ENCODE measurements at regions of chr17 and their contacts with region 1.

Region 1: DNA sequence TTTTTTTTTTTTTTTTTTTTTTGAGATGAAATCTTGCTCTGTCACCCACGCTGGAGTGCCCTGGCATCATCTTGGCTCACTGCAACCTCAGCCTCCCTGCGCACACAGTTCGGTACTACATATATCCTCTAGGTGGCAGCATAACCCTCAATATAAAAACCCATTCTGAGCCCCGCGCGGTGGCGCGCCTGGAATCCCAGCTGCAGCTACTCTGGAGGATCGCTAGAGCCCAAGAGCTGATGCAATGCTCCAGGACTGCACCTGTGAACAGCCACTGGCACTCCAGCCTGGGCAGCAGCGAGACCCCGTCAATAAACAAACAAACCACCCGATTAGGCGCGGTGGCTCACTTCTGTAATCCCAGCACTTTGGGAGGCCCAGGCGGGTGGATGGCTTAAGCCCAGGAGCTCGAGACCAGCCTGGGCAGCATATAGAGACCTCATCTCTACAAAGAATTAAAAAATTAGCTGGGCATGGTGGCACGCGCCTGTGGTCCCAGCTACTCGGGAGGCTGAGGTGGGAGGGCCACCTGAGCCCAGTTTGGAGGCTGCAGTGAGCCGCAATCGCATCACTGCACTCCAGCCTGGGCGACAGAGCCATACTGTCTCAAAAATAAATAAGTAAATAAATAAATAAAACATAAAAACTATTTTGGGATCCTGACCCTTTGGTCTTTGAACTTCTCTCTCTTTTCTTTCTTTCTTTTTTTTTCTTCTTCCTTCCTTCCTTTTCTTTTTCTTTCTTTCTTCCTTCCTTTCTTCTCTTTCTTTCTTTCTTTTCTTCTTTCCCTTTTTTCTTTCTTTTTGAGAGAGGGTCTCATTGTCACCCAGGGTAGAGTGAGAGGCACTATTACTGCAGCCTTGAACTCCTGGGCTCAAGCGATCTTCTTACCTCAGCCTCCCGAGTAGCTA is 15.4 kb upstream of the AKAP10 start:
- DNase-seq: peak; percentile 52 to 79 (median 74)
- ATAC-seq: peak; percentile 100
- H3K4me3 ChIP-seq: no peak overlapping the region
- H3K4me3 Mint-ChIP-seq: peak overlapping the region in 7 of 10 donors; percentile 23 to 62 (median 56)
- H3K27ac ChIP-seq: no peak overlapping the region
- H3K27ac Mint-ChIP-seq: peak overlapping the region in 2 of 9 donors; percentile 14 to 36
- H3K4me1 ChIP-seq: no peaks in the 10 kb centered on the region
- H3K4me1 Mint-ChIP-seq: peaks cover 0 to 11% (median 9%) of the 10 kb centered on the region in 7 donors
- H3K27me3 ChIP-seq: no peaks in the 10 kb centered on the region
- H3K27me3 Mint-ChIP-seq: peaks cover 0 to 22% (median 15%) of the 10 kb centered on the region in 5 donors

Region 2: DNA sequence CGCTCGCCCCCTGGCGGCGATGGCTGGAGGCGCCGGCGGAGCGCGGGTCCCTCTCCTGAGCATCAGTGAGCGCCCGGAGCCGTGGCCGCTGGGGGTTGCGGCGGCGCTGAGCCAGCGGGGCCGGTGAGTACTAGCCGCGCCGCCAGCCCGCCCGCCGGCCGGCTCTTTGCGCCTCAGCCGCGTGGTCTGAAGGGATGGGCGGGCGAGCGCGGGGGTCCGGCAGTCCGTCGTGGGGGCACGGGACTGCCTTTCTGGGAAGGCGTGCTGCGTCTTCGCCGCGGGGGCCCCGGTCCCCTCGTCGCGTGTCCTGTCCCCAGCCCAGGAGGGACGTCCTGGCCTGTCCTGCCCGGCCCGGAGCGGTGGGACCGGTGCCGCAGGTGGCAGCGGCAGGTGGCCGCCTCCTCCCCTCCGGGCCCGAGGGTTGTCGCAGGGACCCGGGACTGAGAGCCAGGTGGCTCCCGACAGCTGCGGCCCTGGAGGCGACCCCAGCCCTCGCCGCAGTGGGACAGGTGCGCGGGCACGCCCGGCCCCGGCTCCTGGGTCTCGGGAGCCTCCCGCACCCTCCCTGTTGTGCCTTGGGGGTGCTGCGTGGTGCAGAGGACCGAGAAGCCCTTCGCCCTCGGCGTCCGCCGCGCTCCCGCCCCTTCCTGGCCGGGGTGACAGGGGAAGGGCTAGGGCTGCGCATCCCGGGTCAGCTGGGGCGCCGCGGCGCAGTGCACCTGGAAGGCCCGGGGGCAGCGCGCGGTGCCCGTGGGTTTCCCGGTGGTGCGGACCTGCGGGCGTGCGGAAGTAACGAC is 16.4 kb after region 1 on chr17 and contains the start of gene SPECC1:
- CTCF ChIA-PET with region 1: interaction called, 14 read pairs
- POLR2A ChIA-PET with region 1: no interaction called
- intact Hi-C with region 1: loop called (anchors 1 kb)
- DNase-seq: peak in 8 of 9 donors; percentile 7 to 95 (median 87)
- ATAC-seq: peak; percentile 100
- H3K4me3 ChIP-seq: peak within 1 kb of the TSS; percentile 85
- H3K4me3 Mint-ChIP-seq: peak within 1 kb of the TSS; percentile 86 to 97 (median 90)
- H3K27ac ChIP-seq: no peak within 1 kb of the TSS
- H3K27ac Mint-ChIP-seq: peak within 1 kb of the TSS in 5 of 9 donors; percentile 25 to 58 (median 44)
- H3K4me1 ChIP-seq: no peaks in the 10 kb centered on the region
- H3K4me1 Mint-ChIP-seq: peaks cover 6 to 17% (median 14%) of the 10 kb centered on the region in 7 donors
- H3K27me3 ChIP-seq: peaks cover 0 to 3% of the 10 kb centered on the region in 2 donors
- H3K27me3 Mint-ChIP-seq: peaks cover 60 to 72% (median 69%) of the 10 kb centered on the region in 5 donors
- total RNA-seq, gene SPECC1: 1.2 to 37.5 (median 5.7) TPM

Region 3: DNA sequence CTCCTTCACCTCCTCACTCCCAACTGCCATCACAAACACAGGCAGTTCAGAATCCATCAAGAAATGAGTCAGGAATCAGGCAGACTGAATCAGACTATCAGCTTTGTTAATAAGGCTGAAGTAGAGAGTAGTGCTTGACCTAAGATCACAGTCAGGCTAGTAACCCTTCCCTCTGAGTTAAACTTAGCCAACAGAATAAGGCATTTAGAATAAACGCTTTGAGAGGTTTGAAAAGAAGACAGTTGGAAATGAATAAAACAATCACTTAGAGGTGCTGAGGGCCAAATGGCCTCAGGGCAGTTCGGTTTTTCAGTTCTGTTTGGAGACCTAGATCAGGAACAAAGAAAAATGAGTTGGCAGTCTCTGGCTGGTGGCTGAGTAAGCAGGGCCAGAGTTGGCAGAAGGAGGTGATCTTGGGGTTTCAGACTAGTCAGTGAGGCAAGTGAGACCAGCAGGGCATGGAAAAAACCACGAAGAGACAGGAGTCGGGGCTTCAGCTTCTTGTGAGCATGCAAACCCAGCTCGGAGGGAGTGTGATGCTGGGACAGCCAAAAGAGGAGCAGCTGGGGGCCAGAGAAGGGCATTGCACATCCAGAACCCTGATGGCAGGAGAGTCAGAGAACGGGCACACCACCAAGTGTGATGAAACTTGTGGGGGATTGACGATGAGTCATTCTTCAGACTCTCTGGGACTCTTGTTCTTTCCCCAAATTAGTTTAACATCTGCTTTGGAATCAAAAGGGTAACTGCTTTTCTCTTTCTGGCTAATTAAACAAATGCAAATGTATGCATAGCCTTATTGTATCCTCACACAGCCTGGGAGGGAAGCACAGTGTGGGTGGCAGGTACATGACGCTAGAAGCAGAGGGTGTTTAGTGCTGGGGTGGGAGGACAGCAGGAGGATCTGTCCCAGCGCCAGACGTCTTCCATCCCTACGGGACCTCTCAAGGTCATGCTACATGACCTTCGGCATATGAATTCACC is 70.9 kb after region 1 on chr17:
- CTCF ChIA-PET with region 1: no interaction called
- POLR2A ChIA-PET with region 1: no interaction called
- intact Hi-C with region 1: no loop called
- DNase-seq: no peak
- ATAC-seq: peak; percentile 75
- H3K4me3 ChIP-seq: no peak overlapping the region
- H3K4me3 Mint-ChIP-seq: no peak overlapping the region
- H3K27ac ChIP-seq: no peak overlapping the region
- H3K27ac Mint-ChIP-seq: no peak overlapping the region
- H3K4me1 ChIP-seq: no peaks in the 10 kb centered on the region
- H3K4me1 Mint-ChIP-seq: peaks cover 0 to 7% (median 0%) of the 10 kb centered on the region in 7 donors
- H3K27me3 ChIP-seq: no peaks in the 10 kb centered on the region
- H3K27me3 Mint-ChIP-seq: peaks cover 0 to 4% (median 0%) of the 10 kb centered on the region in 5 donors

Region 4: DNA sequence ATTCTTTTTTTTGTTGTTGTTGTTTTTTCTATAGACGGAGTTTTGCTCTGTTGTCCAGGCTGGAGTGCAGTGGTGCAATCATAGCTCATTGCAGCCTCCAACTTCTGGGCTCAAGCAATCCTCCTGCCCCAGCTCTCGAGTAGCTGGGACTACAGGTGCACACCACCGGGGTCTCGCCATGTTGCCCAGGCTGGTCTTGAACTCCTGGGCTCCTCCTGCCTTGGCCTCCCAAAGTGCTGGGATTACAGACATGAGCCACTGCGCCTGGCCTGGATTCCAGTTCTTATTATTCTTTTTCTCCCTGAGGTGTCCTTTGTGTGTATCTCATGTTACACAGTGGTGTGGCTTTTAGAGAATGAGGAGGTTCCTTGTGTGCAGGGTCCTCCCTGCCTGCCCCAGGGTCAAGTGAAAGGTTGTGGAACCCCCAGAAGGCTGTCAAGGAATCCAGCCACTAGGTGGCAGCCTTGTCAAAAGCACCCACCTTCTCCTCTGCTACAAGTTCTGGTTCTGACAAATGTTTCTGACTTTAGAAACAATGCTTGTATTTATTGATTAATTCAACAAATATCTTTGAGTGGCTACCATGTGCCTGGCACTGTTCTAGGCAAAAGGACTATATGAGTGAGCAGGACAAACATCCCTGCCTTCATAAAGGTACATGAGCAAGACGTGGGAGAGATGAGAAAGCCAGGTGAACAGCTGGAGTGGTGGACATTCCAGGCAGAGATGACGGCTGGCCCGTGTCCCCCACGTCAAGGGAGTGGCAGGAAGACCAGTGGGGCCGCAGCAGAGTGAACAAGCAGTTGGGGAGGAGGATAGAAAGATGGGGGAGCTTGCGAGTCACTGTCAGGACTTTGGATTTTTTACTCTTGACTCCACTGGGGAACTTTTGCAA is 128.5 kb after region 1 on chr17:
- CTCF ChIA-PET with region 1: interaction called, 20 read pairs
- POLR2A ChIA-PET with region 1: no interaction called
- intact Hi-C with region 1: loop called (anchors 1 kb)
- DNase-seq: peak; percentile 42 to 71 (median 64)
- ATAC-seq: peak; percentile 80
- H3K4me3 ChIP-seq: no peak overlapping the region
- H3K4me3 Mint-ChIP-seq: no peak overlapping the region
- H3K27ac ChIP-seq: no peak overlapping the region
- H3K27ac Mint-ChIP-seq: no peak overlapping the region
- H3K4me1 ChIP-seq: no peaks in the 10 kb centered on the region
- H3K4me1 Mint-ChIP-seq: peaks cover 0 to 3% (median 0%) of the 10 kb centered on the region in 7 donors
- H3K27me3 ChIP-seq: no peaks in the 10 kb centered on the region
- H3K27me3 Mint-ChIP-seq: peaks cover 0 to 18% (median 0%) of the 10 kb centered on the region in 5 donors